Stomach (tissue), 19 donors: ENCODE measurements at regions of chr11 and their contacts with region 1.

Region 1: DNA sequence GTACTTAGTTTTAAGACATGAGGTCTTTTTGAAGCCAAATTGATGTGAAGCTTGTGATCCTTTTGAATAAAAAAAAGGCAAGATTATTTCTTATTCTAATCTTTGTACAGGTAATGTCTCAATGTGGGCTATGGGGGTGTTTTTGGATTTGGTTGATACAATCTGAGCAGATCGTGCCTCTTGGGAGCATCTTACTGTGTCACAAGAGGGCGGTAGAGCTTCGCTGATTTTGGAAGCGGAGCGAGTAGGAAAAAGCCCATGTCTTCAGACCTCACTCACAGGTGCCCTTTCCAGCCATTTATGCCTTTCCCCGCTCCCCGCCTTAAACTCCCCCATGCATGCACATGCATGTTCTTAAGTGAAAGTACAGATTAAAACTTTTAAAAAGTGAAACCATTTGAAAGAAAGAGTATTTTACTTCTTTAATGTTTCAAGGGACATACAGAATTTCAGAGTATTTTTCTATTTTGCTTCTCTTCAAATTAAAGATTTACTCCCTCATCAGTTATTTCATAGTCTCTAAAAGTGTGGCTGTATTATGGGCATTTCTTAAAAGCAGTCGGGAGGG is 18.8 kb downstream of the DDX25 start:
- DNase-seq: peak; percentile 63 to 92
- H3K4me3 ChIP-seq: no peak overlapping the region
- H3K27ac ChIP-seq: no peak overlapping the region
- H3K4me1 ChIP-seq: peaks cover 0 to 12% (median 0%) of the 10 kb centered on the region in 4 donors
- H3K27me3 ChIP-seq: peaks cover 0 to 52% (median 13%) of the 10 kb centered on the region in 3 donors
- CTCF ChIP-seq: peak in 5 of 7 experiments; percentile 54 to 68 (median 64)
- EP300 ChIP-seq: no peak
- POLR2A ChIP-seq: no peak

Region 2: DNA sequence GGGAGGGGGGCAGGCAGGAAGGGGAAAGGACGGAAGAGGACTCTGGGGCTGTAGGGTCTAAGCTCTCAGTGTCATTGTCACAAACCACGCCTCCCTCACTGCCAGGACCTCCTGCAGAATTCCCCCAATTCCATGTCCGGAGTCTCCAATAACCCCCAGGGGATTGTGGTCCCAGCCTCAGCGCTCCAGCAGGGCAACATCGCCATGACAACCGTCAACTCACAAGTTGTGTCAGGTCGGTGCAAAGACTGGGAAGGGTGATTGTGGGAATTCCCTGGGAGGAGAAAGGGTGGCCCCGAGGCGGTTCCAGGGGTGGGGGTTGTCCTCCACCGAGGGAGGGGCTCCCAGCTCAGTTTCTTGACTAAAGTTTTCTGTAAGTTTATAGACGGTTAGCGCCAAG is 513.0 kb before region 1 on chr11:
- intact Hi-C with region 1: no loop called
- DNase-seq: peak in 1 of 2 donors; percentile 42
- H3K4me3 ChIP-seq: no peak overlapping the region
- H3K27ac ChIP-seq: no peak overlapping the region
- H3K4me1 ChIP-seq: peaks cover under 1 to 3% (median 2%) of the 10 kb centered on the region in 4 donors
- H3K27me3 ChIP-seq: peaks cover 0 to 8% (median 5%) of the 10 kb centered on the region in 3 donors
- CTCF ChIP-seq: no peak
- EP300 ChIP-seq: no peak
- POLR2A ChIP-seq: no peak

Region 3: GRCh38 chr11:126186708-126187529 is 263.8 kb after region 1 on chr11:
- intact Hi-C with region 1: loop called (anchors 5 kb)
- DNase-seq: no peak
- H3K4me3 ChIP-seq: no peak overlapping the region
- H3K27ac ChIP-seq: no peak overlapping the region
- H3K4me1 ChIP-seq: peaks cover 0 to 2% (median 0%) of the 10 kb centered on the region in 4 donors
- H3K27me3 ChIP-seq: no peaks in the 10 kb centered on the region
- CTCF ChIP-seq: no peak
- EP300 ChIP-seq: no peak
- POLR2A ChIP-seq: no peak